Naive thymus-derived CD4-positive, alpha-beta T cell (primary cell): ENCODE measurements at regions of chr2 and their contacts with region 1.

Region 1: GRCh38 chr2:35973132-35973736 is 382.3 kb upstream of the CRIM1 start:
- DNase-seq: no peak
- ATAC-seq: peak; percentile 47
- H3K4me3 ChIP-seq: no peak overlapping the region
- H3K4me3 Mint-ChIP-seq: no peak overlapping the region
- H3K27ac ChIP-seq: no peak overlapping the region
- H3K27ac Mint-ChIP-seq: peak overlapping the region in 1 of 9 donors; percentile 44
- H3K4me1 ChIP-seq: peaks cover 0 to 12% of the 10 kb centered on the region in 2 donors
- H3K4me1 Mint-ChIP-seq: peaks cover 0 to 7% (median 0%) of the 10 kb centered on the region in 7 donors
- H3K27me3 ChIP-seq: no peaks in the 10 kb centered on the region
- H3K27me3 Mint-ChIP-seq: peaks cover 0 to 26% (median 0%) of the 10 kb centered on the region in 5 donors

Region 2: GRCh38 chr2:34353509-34354113 is 1619.6 kb before region 1 on chr2:
- CTCF ChIA-PET with region 1: no interaction called
- POLR2A ChIA-PET with region 1: no interaction called
- intact Hi-C with region 1: no loop called
- DNase-seq: no peak
- ATAC-seq: no peak
- H3K4me3 ChIP-seq: no peak overlapping the region
- H3K4me3 Mint-ChIP-seq: no peak overlapping the region
- H3K27ac ChIP-seq: no peak overlapping the region
- H3K27ac Mint-ChIP-seq: no peak overlapping the region
- H3K4me1 ChIP-seq: no peaks in the 10 kb centered on the region
- H3K4me1 Mint-ChIP-seq: no peaks in the 10 kb centered on the region
- H3K27me3 ChIP-seq: no peaks in the 10 kb centered on the region
- H3K27me3 Mint-ChIP-seq: no peaks in the 10 kb centered on the region

Region 3: GRCh38 chr2:36147670-36148390 is 174.6 kb after region 1 on chr2:
- CTCF ChIA-PET with region 1: no interaction called
- POLR2A ChIA-PET with region 1: no interaction called
- intact Hi-C with region 1: loop called in 1 of 2 experiments (anchors 10 kb)
- DNase-seq: no peak
- ATAC-seq: no peak
- H3K4me3 ChIP-seq: no peak overlapping the region
- H3K4me3 Mint-ChIP-seq: peak overlapping the region in 1 of 10 donors; percentile 67
- H3K27ac ChIP-seq: no peak overlapping the region
- H3K27ac Mint-ChIP-seq: peak overlapping the region in 1 of 9 donors; percentile 21
- H3K4me1 ChIP-seq: no peaks in the 10 kb centered on the region
- H3K4me1 Mint-ChIP-seq: peaks cover 0 to 30% (median 5%) of the 10 kb centered on the region in 7 donors
- H3K27me3 ChIP-seq: no peaks in the 10 kb centered on the region
- H3K27me3 Mint-ChIP-seq: peaks cover 0 to 16% (median 0%) of the 10 kb centered on the region in 5 donors

Region 4: GRCh38 chr2:36507408-36507812 is 534.2 kb after region 1 on chr2:
- CTCF ChIA-PET with region 1: no interaction called
- POLR2A ChIA-PET with region 1: no interaction called
- intact Hi-C with region 1: loop called in 1 of 2 experiments (anchors 5 kb)
- DNase-seq: peak in 4 of 9 donors; percentile 10 to 27 (median 16)
- ATAC-seq: peak; percentile 76
- H3K4me3 ChIP-seq: no peak overlapping the region
- H3K4me3 Mint-ChIP-seq: no peak overlapping the region
- H3K27ac ChIP-seq: no peak overlapping the region
- H3K27ac Mint-ChIP-seq: no peak overlapping the region
- H3K4me1 ChIP-seq: no peaks in the 10 kb centered on the region
- H3K4me1 Mint-ChIP-seq: no peaks in the 10 kb centered on the region
- H3K27me3 ChIP-seq: no peaks in the 10 kb centered on the region
- H3K27me3 Mint-ChIP-seq: no peaks in the 10 kb centered on the region

Region 5: GRCh38 chr2:36663851-36664695 is 690.8 kb after region 1 on chr2:
- CTCF ChIA-PET with region 1: no interaction called
- POLR2A ChIA-PET with region 1: no interaction called
- intact Hi-C with region 1: loop called (anchors 2 to 5 kb)
- DNase-seq: peak in 5 of 9 donors; percentile 26 to 48 (median 30)
- ATAC-seq: peak; percentile 75
- H3K4me3 ChIP-seq: no peak overlapping the region
- H3K4me3 Mint-ChIP-seq: no peak overlapping the region
- H3K27ac ChIP-seq: no peak overlapping the region
- H3K27ac Mint-ChIP-seq: no peak overlapping the region
- H3K4me1 ChIP-seq: no peaks in the 10 kb centered on the region
- H3K4me1 Mint-ChIP-seq: no peaks in the 10 kb centered on the region
- H3K27me3 ChIP-seq: peaks cover 0 to 11% of the 10 kb centered on the region in 2 donors
- H3K27me3 Mint-ChIP-seq: peaks cover 3 to 17% (median 12%) of the 10 kb centered on the region in 5 donors